GM12878 (cell line): ENCODE measurements at regions of chr11 and their contacts with region 1.

Region 1: GRCh38 chr11:76919887-76920746 is 59.4 kb downstream of the ACER3 start:
- DNase-seq: peak; percentile 43
- ATAC-seq: peak; percentile 90
- H3K4me3 ChIP-seq: 0 out of 2 replicates have a peak overlapping the region, but pooled peaks have one; percentile 18
- H3K27ac ChIP-seq: no peak overlapping the region
- H3K4me1 ChIP-seq: no peaks in the 10 kb centered on the region
- H3K27me3 ChIP-seq: no peaks in the 10 kb centered on the region
- CTCF ChIP-seq: peak; percentile 78 to 91 (median 83)
- EP300 ChIP-seq: no peak
- POLR2A ChIP-seq: no peak
- RAD21 ChIP-seq: peak; percentile 85

Region 2: DNA sequence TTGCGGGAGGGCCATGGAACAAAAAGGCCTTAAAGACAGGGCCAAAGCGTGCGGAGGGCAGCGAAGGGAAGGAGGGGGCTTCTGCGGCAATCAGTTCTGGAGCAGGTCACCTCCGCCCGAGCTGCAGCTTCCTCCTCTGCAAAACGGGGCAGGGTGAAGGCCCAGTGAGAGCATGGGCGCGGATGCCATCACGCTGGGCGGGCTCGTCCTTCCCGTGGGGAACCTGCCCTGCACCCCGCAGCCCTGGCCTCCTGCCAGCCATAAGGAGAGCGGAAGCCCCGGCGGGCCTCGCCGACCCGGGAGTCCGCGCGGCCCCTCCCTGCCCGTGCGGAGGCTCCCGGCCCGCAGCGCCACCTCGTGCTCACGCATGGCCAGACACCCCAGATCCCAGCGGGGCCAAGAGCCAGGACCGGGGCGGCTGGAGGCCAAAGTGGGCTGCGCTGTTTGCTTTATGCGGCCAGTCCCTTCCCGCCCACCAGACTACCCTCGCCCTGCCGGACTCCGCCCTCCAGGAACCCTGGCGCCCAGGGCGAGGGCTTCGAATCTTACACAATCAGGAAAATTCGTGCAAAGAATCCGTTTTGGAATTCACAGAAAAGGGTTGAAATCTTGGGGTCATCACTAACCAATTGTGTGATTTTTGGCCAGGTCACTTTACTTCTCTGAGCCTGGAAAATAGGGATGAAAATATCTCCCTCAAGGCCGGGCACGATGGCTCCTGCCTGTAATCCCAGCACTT is 120.9 kb before region 1 on chr11:
- CTCF ChIA-PET with region 1: interaction called, 120 read pairs
- POLR2A ChIA-PET with region 1: no interaction called
- RAD21 ChIA-PET with region 1: interaction called, 9 read pairs
- SMC1A ChIA-PET with region 1: interaction called, 7 read pairs
- in situ Hi-C with region 1: no loop called
- intact Hi-C with region 1: no loop called
- DNase-seq: no peak
- ATAC-seq: peak; percentile 99
- H3K4me3 ChIP-seq: no peak overlapping the region
- H3K27ac ChIP-seq: no peak overlapping the region
- H3K4me1 ChIP-seq: no peaks in the 10 kb centered on the region
- H3K27me3 ChIP-seq: no peaks in the 10 kb centered on the region
- CTCF ChIP-seq: peak; percentile 78 to 91 (median 89)
- EP300 ChIP-seq: no peak
- POLR2A ChIP-seq: no peak
- RAD21 ChIP-seq: peak; percentile 74

Region 3: DNA sequence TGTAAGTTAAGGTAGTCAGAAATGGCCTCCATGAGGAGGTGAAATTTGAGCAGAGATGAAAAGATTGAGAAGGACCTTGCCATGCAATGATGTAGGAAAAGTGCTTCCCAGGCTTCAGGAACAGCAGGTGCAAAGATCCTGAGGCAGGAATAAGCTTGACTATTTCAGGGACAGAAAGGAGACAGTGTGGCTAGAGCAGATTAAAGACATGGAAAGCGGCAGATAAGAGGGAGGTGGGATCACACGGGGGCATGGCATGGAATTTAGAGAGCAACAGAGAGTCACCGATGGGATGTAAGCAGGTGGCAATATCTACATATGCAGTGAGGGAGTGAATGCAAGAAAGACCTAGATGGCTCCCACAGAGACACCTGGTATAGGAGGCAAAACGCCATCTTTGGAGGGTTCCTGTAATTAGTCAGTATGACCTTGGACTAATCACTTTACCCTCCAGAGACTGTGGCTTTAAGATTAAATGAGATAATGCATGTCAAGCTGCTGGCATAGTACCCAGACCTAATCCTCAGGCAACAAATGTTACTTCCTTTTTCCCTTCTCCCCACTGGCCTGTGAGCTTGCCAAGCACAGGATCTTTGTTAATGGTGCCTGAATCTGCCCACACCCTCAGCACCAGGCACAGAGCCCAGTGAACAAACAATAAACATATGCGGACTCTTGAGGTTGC is 84.0 kb before region 1 on chr11:
- CTCF ChIA-PET with region 1: interaction called, 21 read pairs
- POLR2A ChIA-PET with region 1: interaction called, 3 read pairs
- RAD21 ChIA-PET with region 1: interaction called, 7 read pairs
- SMC1A ChIA-PET with region 1: interaction called, 8 read pairs
- in situ Hi-C with region 1: no loop called
- intact Hi-C with region 1: no loop called
- DNase-seq: no peak
- ATAC-seq: no peak
- H3K4me3 ChIP-seq: no peak overlapping the region
- H3K27ac ChIP-seq: no peak overlapping the region
- H3K4me1 ChIP-seq: no peaks in the 10 kb centered on the region
- H3K27me3 ChIP-seq: peaks cover 0 to 1% of the 10 kb centered on the region in 2 experiments; a peak in 1 of 4 replicates
- CTCF ChIP-seq: no peak
- EP300 ChIP-seq: no peak
- POLR2A ChIP-seq: no peak
- RAD21 ChIP-seq: no peak

Region 4: DNA sequence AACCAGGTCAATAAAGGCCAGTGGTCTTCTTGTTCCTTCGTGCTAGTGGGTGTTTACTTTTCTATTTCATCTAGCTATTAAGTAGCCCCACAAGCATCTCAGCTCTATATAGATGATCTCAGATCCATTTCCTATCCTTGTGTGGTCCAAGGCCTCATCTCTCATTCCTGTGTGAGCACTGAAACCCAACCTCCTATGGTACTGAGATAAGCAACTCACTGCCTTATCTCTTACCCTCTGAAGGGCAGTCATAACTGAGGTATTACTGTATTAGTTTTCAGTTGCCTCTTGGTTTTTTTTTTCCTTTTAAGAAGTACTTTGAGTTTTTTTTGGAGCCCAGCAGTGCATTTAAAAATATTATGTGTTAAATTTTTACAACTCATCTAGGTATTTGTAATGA is 31.1 kb before region 1 on chr11:
- CTCF ChIA-PET with region 1: interaction called, 23 read pairs
- POLR2A ChIA-PET with region 1: no interaction called
- RAD21 ChIA-PET with region 1: interaction called, 3 read pairs
- SMC1A ChIA-PET with region 1: interaction called, 4 read pairs
- in situ Hi-C with region 1: no loop called
- intact Hi-C with region 1: no loop called
- DNase-seq: no peak
- ATAC-seq: peak; percentile 40; the same call in 2 of the 3 replicates
- H3K4me3 ChIP-seq: no peak overlapping the region
- H3K27ac ChIP-seq: no peak overlapping the region
- H3K4me1 ChIP-seq: peaks cover 4% of the 10 kb centered on the region; the same call in 1 of the 2 replicates
- H3K27me3 ChIP-seq: no peaks in the 10 kb centered on the region
- CTCF ChIP-seq: no peak
- EP300 ChIP-seq: no peak
- POLR2A ChIP-seq: no peak
- RAD21 ChIP-seq: no peak

Region 5: DNA sequence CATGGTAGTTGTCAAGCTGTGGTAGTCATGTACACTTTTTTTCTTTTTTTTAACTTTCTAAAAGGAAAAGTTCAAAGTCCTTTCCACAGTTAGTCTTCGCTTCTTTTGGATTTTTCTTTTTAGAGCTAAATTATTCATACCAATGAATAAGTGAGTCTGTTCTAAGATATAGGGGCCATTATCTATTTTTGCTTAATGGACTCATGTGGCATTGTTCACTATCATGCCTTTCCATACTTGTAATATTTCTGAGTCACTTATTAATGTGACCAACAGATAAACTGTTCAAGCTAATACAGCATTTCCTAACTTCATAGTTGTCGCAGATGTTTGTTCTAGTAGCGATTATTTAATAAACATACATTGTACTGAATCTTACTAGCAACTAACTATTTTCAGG is 106.1 kb after region 1 on chr11:
- CTCF ChIA-PET with region 1: interaction called, 23 read pairs
- POLR2A ChIA-PET with region 1: no interaction called
- RAD21 ChIA-PET with region 1: interaction called, 6 read pairs
- SMC1A ChIA-PET with region 1: interaction called, 11 read pairs
- in situ Hi-C with region 1: no loop called
- intact Hi-C with region 1: no loop called
- DNase-seq: no peak
- ATAC-seq: no peak
- H3K4me3 ChIP-seq: no peak overlapping the region
- H3K27ac ChIP-seq: no peak overlapping the region
- H3K4me1 ChIP-seq: no peaks in the 10 kb centered on the region
- H3K27me3 ChIP-seq: no peaks in the 10 kb centered on the region; a peak in 1 of 4 replicates
- CTCF ChIP-seq: no peak
- EP300 ChIP-seq: no peak
- POLR2A ChIP-seq: no peak
- RAD21 ChIP-seq: no peak

Region 6: DNA sequence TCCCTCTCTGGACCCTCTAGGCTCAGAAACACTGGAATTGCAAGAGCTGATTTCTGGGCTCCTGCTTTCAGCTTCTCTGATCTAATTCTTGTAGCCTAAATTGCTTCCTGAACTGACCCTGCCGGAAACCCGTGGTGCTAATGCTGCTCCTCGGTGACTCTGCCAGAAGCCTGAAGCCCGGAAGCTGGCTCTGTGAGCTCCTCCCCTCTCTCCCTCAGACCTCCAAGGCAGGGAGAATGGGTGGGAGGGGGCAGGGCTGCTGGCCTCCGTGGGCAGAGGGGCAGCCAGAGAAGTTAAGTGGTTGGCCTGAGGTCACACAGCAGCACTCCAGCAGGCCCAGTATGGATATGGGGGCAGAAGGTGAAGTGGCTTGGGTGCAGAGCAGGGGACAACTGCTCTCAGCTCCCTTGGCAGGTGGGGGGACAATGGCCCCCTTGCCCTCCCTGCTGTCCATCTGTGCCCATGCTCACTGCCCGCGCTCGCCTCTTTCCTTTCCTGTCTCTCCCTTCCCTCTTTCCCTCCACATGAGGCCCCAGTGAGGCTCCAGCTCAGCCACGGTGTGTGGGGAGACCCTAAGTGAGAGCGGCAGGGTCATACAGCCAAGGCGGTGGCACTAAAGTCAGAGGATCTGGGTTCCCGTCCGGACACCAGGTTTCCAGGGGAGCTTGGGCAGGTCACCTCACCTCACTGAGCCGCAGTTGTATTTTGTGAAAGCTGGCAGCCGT is 162.9 kb after region 1 on chr11:
- CTCF ChIA-PET with region 1: interaction called, 10 read pairs
- POLR2A ChIA-PET with region 1: no interaction called
- RAD21 ChIA-PET with region 1: interaction called, 84 read pairs
- SMC1A ChIA-PET with region 1: interaction called, 3 read pairs
- in situ Hi-C with region 1: no loop called
- intact Hi-C with region 1: no loop called
- DNase-seq: no peak
- ATAC-seq: peak; percentile 74
- H3K4me3 ChIP-seq: no peak overlapping the region
- H3K27ac ChIP-seq: no peak overlapping the region
- H3K4me1 ChIP-seq: peaks cover 14% of the 10 kb centered on the region
- H3K27me3 ChIP-seq: no peaks in the 10 kb centered on the region
- CTCF ChIP-seq: no peak
- EP300 ChIP-seq: no peak
- POLR2A ChIP-seq: no peak
- RAD21 ChIP-seq: no peak